OCI-LY7 (cell line): ENCODE measurements at regions of chr6 and their contacts with region 1.

Region 1: GRCh38 chr6:30533460-30534294 is 22.6 kb downstream of the GNL1 start:
- DNase-seq: no peak
- H3K4me3 ChIP-seq: no peak overlapping the region
- H3K27ac ChIP-seq: no peak overlapping the region
- H3K4me1 ChIP-seq: no peaks in the 10 kb centered on the region
- CTCF ChIP-seq: no peak

Region 2: DNA sequence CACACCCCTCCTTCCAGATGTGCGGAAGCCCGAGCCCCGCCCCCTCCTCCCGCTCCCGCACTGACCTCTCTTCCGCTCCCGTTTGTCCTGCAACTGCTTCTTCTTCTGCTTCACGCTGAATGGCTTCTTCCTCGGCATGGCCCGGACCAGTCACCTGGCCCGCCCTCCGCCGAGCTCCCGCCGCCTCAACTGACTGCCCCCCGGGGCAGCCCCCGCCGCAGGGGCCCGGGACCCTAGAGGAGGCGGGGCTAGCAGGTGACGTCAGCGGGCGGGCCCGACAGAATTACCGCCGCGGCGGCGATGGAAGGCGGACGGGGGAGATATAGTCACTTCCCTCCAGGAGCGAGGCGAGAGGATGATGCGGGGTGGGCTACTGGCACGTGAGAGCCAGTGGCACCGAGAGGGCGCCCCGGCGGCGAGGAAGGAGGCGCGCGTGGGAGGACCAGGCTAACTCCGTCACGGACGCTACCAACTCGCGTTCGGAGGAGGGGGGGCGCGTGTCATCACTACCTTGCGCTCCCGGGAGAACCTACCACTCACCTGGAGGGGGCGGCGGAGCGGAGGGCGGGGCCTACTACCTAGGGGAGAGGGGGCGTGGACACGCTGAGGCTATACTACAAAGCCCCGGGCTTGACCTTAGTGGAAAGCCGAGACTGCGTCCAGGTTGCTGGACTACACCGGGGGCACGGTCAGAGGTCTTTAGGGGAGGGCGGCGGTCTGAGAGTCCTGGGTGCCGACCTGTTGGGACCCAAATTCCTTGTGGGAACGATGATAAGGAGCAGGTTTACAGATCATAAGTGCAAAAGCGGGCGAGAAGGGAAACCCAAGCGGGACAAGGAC is 22.6 kb after region 1 on chr6 and contains the start of gene GNL1:
- CTCF ChIA-PET with region 1: no interaction called
- POLR2A ChIA-PET with region 1: no interaction called
- intact Hi-C with region 1: no loop called
- DNase-seq: peak; percentile 97
- H3K4me3 ChIP-seq: peak within 1 kb of the TSS; percentile 84
- H3K27ac ChIP-seq: peak within 1 kb of the TSS; percentile 89
- H3K4me1 ChIP-seq: peaks cover 18% of the 10 kb centered on the region
- CTCF ChIP-seq: no peak
- total RNA-seq, gene GNL1: 51.2 and 66.4 TPM in 2 replicates

Region 3: DNA sequence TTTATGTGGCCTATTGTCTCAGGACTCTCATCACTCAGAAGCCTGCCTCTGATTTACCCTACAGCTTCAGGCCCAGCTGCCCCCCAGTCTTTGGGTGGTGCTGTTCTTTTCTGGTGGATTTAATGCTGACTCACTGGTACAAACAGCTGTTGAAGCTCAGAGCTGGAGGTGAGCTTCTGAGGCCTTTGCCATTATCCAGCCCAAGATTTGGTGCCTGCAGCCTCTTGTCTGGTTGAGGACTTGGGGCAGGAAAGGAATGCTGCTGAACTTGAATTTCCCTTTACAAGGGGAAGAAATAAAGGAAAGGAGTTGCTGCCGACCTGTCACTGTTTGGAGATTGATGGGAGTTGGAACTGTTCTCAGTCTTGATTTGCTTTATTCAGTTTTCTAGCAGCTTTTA is 57.3 kb after region 1 on chr6:
- CTCF ChIA-PET with region 1: no interaction called
- POLR2A ChIA-PET with region 1: no interaction called
- intact Hi-C with region 1: loop called (anchors 2 kb)
- DNase-seq: no peak
- H3K4me3 ChIP-seq: no peak overlapping the region
- H3K27ac ChIP-seq: no peak overlapping the region
- H3K4me1 ChIP-seq: no peaks in the 10 kb centered on the region
- CTCF ChIP-seq: no peak